ENCODE measurements at regions of chr15 and their contacts with region 1.

Region 1: DNA sequence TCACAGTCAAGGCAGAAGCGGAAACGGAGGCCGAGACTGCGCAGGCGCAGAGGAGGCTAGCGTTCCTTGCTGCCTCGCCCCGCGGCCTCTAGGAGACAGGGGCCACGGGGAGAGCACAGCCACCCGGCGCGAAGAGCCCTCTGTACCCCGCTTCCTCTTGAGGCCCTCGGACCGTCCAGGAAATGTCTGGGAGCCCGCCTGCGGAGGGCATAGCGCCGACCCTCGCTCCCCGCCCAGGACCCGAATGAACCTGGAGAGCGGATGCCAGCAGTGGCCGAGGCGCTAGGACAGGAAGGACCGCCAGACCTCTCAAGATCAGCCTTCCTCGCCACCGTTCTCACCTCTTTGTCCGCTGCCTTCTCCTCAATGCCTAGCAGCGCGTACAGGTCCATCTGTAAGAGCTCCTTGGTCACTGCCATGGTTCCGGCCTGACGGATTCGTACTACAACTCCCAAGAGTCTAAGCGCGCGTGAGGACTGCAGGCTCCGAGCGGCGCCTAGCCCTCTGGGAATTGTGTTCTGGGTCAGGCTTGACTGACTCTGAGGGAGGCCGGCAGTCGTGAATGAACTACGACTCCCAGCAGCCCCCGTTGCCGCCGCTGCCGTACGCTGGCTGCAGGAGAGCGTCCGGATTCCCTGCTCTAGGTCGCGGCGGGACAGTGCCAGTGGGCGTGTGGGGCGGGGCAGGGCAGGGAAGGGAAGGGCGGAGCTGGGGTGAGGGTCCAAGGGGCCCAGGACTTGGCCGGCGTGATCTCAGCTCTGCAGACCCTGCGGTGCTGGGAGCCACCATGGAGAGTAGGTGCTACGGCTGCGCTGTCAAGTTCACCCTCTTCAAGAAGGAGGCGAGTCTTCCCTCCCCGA is at the starts of genes DNAJC17 and ZFYVE19:
- DNase-seq: peak; percentile 91 to 93
- H3K4me3 ChIP-seq: peak within 1 kb of the TSS; percentile 99
- H3K27ac ChIP-seq: peak within 1 kb of the TSS; percentile 72
- H3K4me1 ChIP-seq: peaks cover 9% of the 10 kb centered on the region; the same call in 1 of the 2 replicates
- H3K27me3 ChIP-seq: no peaks in the 10 kb centered on the region
- CTCF ChIP-seq: no peak
- total RNA-seq, gene DNAJC17: 27.4 and 33.0 TPM in 2 replicates
- total RNA-seq, gene ZFYVE19: 32.6 and 33.1 TPM in 2 replicates

Region 2: GRCh38 chr15:40743921-40744814 is 63.1 kb before region 1 on chr15:
- CTCF ChIA-PET with region 1: no interaction called
- POLR2A ChIA-PET with region 1: no interaction called
- intact Hi-C with region 1: no loop called
- DNase-seq: no peak
- H3K4me3 ChIP-seq: no peak overlapping the region
- H3K27ac ChIP-seq: no peak overlapping the region
- H3K4me1 ChIP-seq: no peaks in the 10 kb centered on the region
- H3K27me3 ChIP-seq: no peaks in the 10 kb centered on the region
- CTCF ChIP-seq: no peak

Region 3: DNA sequence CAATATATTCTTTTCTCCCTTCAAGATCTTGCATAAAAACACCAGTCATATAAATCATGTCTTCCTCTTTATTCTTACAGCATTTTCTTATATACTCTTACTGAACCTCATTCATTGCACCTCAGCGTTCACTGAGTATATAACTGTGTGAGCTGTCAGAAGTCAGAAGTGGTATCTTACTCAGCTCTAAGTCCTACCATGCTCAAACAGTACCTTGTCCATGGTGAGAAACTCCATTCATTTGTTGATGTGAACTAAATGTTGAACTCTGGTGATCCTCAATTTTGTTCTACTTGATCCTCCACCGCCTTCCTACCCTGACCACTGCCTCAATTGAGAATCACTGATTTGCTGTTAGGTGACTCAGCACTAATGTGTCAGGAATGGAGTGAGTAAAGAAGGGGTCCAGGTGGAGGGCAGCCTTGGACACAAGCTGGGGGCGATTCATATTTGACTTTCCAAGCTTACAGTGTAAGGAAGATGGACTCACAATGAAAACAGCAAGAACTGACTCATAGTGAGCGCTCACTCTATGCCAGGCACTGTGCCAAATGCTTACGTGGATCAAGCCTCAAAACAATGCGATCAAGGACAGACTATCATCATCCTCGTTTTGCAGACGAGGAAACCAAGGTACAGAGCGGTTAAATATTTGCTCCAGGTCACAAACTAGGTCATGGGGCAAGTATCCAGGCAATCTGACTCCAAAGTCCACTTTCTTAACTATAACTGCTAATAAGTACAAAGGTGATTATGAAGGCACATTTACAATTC is 13.9 kb before region 1 on chr15:
- CTCF ChIA-PET with region 1: no interaction called
- POLR2A ChIA-PET with region 1: interaction called, 11 read pairs
- intact Hi-C with region 1: loop called (anchors 1 kb)
- DNase-seq: peak; percentile 73 to 91
- H3K4me3 ChIP-seq: no peak overlapping the region; the same call in 1 of the 2 replicates
- H3K27ac ChIP-seq: peak overlapping the region; percentile 88
- H3K4me1 ChIP-seq: peaks cover 80% of the 10 kb centered on the region
- H3K27me3 ChIP-seq: no peaks in the 10 kb centered on the region
- CTCF ChIP-seq: no peak

Region 4: DNA sequence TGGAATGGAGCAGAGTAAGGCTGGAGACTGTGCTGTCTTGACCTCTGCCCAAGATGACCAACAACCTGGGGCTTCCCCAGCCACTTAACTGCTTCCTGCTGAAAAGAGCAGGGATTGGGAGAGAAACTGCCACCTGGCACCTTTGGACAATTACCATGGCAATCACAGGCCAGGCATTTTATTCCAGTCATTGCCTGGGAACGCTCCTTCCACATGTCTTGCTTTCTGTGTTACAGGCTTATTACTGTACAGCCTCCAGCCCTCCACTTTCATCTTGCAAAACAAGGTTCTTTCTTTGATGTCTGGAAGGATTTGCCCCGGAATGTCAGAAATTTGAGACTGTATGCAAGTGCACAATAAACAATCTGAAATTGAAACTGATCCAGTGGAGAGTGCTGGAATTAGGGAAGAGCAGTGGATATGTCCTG is 18.4 kb after region 1 on chr15:
- CTCF ChIA-PET with region 1: interaction called, 11 read pairs
- POLR2A ChIA-PET with region 1: no interaction called
- intact Hi-C with region 1: loop called (anchors 2 kb)
- DNase-seq: peak; percentile 74 to 98
- H3K4me3 ChIP-seq: peak overlapping the region; percentile 22; the same call in 1 of the 2 replicates
- H3K27ac ChIP-seq: peak overlapping the region; percentile 100
- H3K4me1 ChIP-seq: peaks cover 47% of the 10 kb centered on the region
- H3K27me3 ChIP-seq: no peaks in the 10 kb centered on the region
- CTCF ChIP-seq: no peak

Region 5: GRCh38 chr15:42037656-42038055 is 1230.4 kb after region 1 on chr15:
- CTCF ChIA-PET with region 1: no interaction called
- POLR2A ChIA-PET with region 1: interaction called, 10 read pairs
- intact Hi-C with region 1: no loop called
- DNase-seq: peak in 1 of 2 experiments; percentile 48
- H3K4me3 ChIP-seq: no peak overlapping the region
- H3K27ac ChIP-seq: no peak overlapping the region
- H3K4me1 ChIP-seq: peaks cover 29% of the 10 kb centered on the region
- H3K27me3 ChIP-seq: no peaks in the 10 kb centered on the region
- CTCF ChIP-seq: no peak